ENCODE measurements at regions of chr10 and their contacts with region 1.

Region 1: DNA sequence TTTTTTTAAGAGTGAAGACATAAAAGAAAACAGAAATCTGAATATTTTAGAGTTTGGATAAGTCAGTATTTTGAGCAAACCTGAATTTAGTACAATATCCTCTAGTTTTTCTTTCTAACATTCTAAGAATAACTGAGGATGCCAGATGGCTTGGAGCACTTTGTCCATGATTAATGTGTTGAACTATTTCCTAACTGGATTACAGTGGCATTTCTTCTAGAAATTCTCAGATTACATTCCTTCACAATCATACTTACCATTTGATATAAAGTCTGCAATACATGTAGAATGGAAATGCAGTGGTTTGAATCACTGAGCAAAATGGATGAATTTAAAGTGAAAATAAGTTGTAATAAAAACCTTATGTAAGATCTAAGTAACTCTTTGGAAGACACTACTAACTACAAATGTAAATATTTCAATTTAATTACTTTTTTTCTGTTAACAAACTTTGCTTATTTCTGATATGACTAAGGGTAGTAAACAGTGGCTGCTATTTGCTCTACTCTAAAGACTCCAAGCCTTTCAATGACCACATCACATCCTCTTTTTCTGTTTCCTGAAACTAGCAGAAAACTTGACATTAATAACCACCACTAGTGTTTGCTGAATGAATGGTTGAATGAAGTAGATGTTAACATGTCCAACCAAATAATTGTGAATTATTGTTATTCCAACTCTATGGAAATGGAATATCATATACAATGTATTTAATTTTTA is 102.8 kb downstream of the PRKG1 start:
- DNase-seq: no peak
- ATAC-seq: no peak
- H3K4me3 ChIP-seq: no peak overlapping the region
- H3K27ac ChIP-seq: no peak overlapping the region
- H3K4me1 ChIP-seq: no peaks in the 10 kb centered on the region
- H3K27me3 ChIP-seq: no peaks in the 10 kb centered on the region
- CTCF ChIP-seq: no peak

Region 2: DNA sequence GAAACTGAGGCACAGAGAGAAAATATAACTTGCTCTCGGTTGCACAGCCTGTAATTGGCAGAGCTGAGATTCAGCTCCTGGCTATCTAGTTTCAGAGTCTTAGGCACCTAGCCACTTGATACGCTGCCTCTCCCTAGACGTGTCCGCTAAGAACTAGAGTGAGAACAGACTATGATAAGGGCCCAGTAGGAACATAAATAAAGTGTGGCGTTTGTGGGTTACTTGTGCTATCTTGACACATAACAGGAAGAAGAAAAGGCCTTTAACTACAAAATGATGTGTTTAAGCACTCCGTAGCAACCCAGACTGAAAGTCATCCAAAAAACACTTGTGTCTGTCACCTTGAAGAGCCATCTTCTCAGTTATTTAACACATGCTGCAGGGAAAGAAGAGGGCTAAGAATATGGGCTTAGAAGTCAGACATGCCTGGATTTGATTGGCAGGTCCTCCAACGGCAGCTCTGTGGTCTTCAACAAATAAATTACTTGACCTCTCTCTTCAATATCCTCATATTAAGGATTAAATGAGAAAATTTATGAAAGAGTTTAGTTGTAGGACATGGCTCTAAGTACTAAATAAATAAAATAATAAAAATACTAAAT is 649.6 kb before region 1 on chr10:
- CTCF ChIA-PET with region 1: no interaction called
- POLR2A ChIA-PET with region 1: interaction called, 11 read pairs
- in situ Hi-C with region 1: no loop called
- intact Hi-C with region 1: no loop called
- DNase-seq: no peak
- ATAC-seq: no peak
- H3K4me3 ChIP-seq: no peak overlapping the region
- H3K27ac ChIP-seq: no peak overlapping the region
- H3K4me1 ChIP-seq: no peaks in the 10 kb centered on the region
- H3K27me3 ChIP-seq: no peaks in the 10 kb centered on the region
- CTCF ChIP-seq: no peak

Region 3: DNA sequence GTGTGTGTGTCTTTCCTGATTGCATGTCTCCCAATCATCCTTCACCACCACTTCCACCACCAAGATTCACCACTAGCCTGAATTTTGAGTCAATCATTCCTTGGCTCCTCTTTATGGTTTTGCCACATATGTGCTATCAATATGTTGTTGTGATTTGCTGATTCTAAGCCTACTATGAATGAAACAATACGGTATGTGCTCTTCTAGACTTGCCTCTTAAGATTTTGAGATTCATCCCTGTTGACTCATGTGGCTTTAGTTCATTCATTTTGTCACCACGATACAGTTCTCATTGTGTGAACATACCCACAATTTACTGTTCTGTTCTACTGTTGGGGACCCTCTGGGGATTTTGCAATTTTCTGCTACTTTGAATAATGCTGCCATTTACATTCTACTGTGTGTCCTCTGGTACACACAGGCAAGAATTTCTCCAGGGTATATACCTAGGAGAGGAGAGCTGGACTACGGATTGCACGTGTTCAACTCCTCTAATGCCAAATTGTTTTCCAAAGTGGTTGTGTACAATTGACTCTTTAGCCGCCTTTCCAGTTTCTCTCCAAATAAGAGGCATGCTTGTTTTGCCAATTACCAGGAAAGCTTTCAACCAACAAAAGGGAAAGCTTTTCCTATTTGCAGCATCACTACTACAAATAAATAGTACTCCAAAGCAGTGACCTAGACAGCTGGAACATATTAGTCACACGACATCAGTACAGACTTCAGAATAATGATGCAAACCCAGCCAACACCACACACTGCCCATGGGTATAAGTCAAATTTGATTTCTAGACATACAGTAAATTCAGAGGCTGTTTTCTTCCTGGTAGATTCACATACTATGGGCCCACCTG is 583.4 kb before region 1 on chr10:
- CTCF ChIA-PET with region 1: no interaction called
- POLR2A ChIA-PET with region 1: no interaction called
- in situ Hi-C with region 1: no loop called
- intact Hi-C with region 1: no loop called
- DNase-seq: peak; percentile 61
- ATAC-seq: no peak
- H3K4me3 ChIP-seq: no peak overlapping the region
- H3K27ac ChIP-seq: no peak overlapping the region
- H3K4me1 ChIP-seq: peaks cover 1% of the 10 kb centered on the region; the same call in 1 of the 2 replicates
- H3K27me3 ChIP-seq: no peaks in the 10 kb centered on the region
- CTCF ChIP-seq: no peak